ENCODE measurements at regions of chr2 and their contacts with region 1.

Region 1: GRCh38 chr2:9555297-9556141 is at the start of gene ADAM17:
- DNase-seq: peak; percentile 92
- ATAC-seq: peak; percentile 87
- H3K4me3 Mint-ChIP-seq: peak within 1 kb of the TSS; percentile 97
- H3K27ac Mint-ChIP-seq: peak within 1 kb of the TSS; percentile 95
- H3K4me1 Mint-ChIP-seq: peaks cover 50% of the 10 kb centered on the region
- H3K27me3 Mint-ChIP-seq: no peaks in the 10 kb centered on the region
- total RNA-seq, gene ADAM17: 20.2 to 23.1 TPM

Region 2: GRCh38 chr2:9423100-9423921 is 132.2 kb before region 1 on chr2 and contains the starts of genes CPSF3 and ITGB1BP1:
- CTCF ChIA-PET with region 1: no interaction called
- POLR2A ChIA-PET with region 1: interaction called, 3 read pairs
- intact Hi-C with region 1: loop called (anchors 1 to 5 kb)
- DNase-seq: peak; percentile 99
- ATAC-seq: peak; percentile 89
- H3K4me3 Mint-ChIP-seq: no peak within 1 kb of the TSS
- H3K27ac Mint-ChIP-seq: peak within 1 kb of the TSS; percentile 94
- H3K4me1 Mint-ChIP-seq: peaks cover 36% of the 10 kb centered on the region
- H3K27me3 Mint-ChIP-seq: no peaks in the 10 kb centered on the region
- total RNA-seq, gene CPSF3: 72.3 to 103 TPM
- total RNA-seq, gene ITGB1BP1: 89.7 to 92.1 TPM

Region 3: DNA sequence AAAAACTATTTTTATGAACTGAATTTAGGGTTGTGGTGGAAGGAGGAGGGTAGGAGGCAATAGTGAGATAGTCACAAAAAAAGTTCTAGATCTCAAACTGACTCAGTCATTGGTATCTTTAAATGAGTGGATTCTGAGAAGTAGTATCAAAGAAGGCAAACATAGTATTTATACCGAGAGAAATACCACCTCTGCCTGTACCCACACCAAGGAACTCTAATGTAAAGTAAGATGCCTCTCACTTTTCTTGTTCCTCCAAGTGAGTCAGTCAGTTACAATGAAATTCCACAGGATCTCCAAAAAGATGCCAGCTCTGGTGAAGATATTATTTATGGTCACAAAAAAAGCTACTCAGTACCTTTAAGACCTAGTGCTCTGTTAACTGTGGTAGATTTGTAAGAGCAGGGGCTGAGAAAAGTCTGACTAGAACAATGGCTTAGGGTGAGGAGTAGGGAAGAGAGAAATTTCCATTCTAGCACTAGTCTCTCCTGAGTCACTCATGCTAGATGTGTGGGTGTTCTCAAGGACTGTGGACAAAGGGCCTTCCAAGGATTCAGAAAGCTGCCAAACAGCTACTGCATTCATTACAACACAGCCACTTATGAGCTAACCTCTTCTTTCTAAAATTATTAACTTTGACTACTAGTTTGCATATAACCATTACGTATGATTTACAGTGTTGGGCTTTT is 39.0 kb after region 1 on chr2:
- CTCF ChIA-PET with region 1: interaction called, 4 read pairs
- POLR2A ChIA-PET with region 1: interaction called, 10 read pairs
- intact Hi-C with region 1: loop called (anchors 1 kb)
- DNase-seq: peak; percentile 21
- ATAC-seq: peak; percentile 89
- H3K4me3 Mint-ChIP-seq: no peak overlapping the region
- H3K27ac Mint-ChIP-seq: peak overlapping the region; percentile 82
- H3K4me1 Mint-ChIP-seq: peaks cover 83% of the 10 kb centered on the region
- H3K27me3 Mint-ChIP-seq: no peaks in the 10 kb centered on the region

Region 4: GRCh38 chr2:9703085-9703641 is 147.6 kb after region 1 on chr2:
- CTCF ChIA-PET with region 1: no interaction called
- POLR2A ChIA-PET with region 1: no interaction called
- intact Hi-C with region 1: loop called (anchors 1 to 2 kb)
- DNase-seq: peak; percentile 91
- ATAC-seq: peak; percentile 96
- H3K4me3 Mint-ChIP-seq: no peak overlapping the region
- H3K27ac Mint-ChIP-seq: peak overlapping the region; percentile 37
- H3K4me1 Mint-ChIP-seq: peaks cover 42% of the 10 kb centered on the region
- H3K27me3 Mint-ChIP-seq: no peaks in the 10 kb centered on the region

Region 5: GRCh38 chr2:9782197-9782719 is 226.7 kb after region 1 on chr2:
- CTCF ChIA-PET with region 1: no interaction called
- POLR2A ChIA-PET with region 1: no interaction called
- intact Hi-C with region 1: loop called (anchors 1 to 5 kb)
- DNase-seq: peak; percentile 89
- ATAC-seq: peak; percentile 80
- H3K4me3 Mint-ChIP-seq: peak overlapping the region; percentile 53
- H3K27ac Mint-ChIP-seq: peak overlapping the region; percentile 93
- H3K4me1 Mint-ChIP-seq: peaks cover 57% of the 10 kb centered on the region
- H3K27me3 Mint-ChIP-seq: no peaks in the 10 kb centered on the region

Region 6: GRCh38 chr2:10412384-10412783 is 856.9 kb after region 1 on chr2:
- CTCF ChIA-PET with region 1: no interaction called
- POLR2A ChIA-PET with region 1: no interaction called
- intact Hi-C with region 1: no loop called
- DNase-seq: peak; percentile 73
- ATAC-seq: no peak
- H3K4me3 Mint-ChIP-seq: no peak overlapping the region
- H3K27ac Mint-ChIP-seq: no peak overlapping the region
- H3K4me1 Mint-ChIP-seq: peaks cover 42% of the 10 kb centered on the region
- H3K27me3 Mint-ChIP-seq: no peaks in the 10 kb centered on the region